Common myeloid progenitor, CD34-positive (primary cell): ENCODE measurements at regions of chr7 and their contacts with region 1.

Region 1: DNA sequence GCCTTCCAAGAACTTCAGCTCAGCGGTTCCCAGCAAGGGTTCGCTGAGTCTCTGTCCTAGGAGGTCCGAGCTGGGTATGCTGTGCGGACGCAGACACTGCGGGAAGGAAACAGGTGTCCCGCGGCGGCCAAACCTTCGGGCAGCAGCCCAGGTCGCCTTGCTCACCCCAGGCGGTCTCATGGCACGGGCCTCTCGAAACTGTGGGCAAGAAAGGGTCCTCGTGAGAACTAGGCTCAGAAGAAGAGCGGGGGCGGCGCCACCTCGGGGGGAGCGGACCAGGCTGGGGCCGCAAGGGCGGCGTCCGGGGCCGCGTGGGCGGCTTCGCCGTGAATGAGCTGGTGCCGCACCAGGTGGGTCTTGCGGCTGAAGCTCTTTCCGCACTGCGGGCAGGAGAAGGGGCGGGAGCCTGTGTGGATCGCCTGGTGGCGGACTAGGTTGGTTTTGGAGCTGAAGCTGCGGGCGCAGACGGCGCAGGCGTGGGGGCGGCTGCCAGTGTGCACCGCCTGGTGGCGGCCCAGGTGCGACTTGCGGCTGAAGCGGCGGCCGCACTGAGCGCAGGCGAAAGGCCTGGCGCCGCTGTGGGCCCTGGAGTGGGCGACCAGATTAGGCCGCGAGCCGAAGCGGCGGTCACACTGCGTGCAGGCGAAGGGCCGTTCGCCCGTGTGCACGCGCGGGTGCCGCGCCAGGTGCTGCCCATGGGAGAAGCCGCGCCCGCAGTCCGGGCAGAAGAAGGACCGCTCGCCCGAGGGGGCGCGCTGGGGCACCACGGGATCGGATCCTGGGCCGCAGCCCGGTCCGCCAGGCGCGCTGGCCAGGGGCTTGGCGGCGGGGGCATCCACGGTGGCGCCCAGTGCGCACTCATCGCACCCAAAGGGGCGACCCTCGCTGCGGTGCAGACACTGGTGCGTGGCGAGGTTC is 8.6 kb downstream of the ZNF467 start:
- DNase-seq: no peak
- H3K4me3 ChIP-seq: no peak overlapping the region
- H3K27ac ChIP-seq: no peak overlapping the region
- H3K4me1 ChIP-seq: no peaks in the 10 kb centered on the region
- H3K27me3 ChIP-seq: no peaks in the 10 kb centered on the region

Region 2: DNA sequence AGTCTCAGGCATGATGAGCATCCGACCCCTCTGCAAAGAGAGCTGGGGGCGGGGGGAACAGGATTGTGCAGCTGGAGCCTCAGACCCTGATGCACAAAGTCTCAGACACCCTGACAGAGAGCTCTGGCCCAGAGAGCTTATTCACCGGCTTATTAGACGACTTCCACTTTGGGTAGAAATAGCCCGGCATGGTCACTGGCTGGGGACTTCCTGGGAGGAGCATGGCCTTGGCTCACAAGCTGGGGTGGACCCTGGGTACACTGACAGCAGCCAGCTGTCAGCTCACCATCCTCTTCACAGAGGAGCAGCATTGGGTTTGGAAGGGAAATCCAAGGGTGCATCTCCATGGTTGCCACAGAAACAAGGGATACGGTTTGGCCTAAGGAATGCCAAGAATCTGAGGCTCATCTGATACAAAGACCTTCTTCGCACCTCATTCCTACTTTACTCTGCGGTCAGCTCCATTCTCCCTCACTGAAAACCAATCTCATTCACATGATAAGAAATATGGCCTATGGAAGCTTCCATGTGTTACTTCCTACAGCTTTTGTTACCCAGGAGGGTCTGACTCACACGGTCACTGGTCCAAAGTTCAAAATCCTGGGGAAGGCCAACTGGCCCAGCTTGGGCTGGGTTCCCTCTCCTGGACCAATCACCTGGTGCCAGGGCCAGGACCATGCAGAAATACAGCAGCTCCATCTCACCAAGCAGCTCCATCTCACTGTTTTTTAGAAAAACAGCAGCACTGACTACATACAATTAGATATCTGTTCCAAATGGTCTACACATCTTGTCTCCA is 16.5 kb before region 1 on chr7:
- CTCF ChIA-PET with region 1: interaction called, 10 read pairs
- POLR2A ChIA-PET with region 1: interaction called, 4 read pairs
- DNase-seq: no peak
- H3K4me3 ChIP-seq: no peak overlapping the region
- H3K27ac ChIP-seq: no peak overlapping the region
- H3K4me1 ChIP-seq: peaks cover 0 to 41% (median 14%) of the 10 kb centered on the region in 4 experiments
- H3K27me3 ChIP-seq: no peaks in the 10 kb centered on the region